Aorta (tissue), 5 donors: ENCODE measurements at regions of chr1 and their contacts with region 1.

Region 1: DNA sequence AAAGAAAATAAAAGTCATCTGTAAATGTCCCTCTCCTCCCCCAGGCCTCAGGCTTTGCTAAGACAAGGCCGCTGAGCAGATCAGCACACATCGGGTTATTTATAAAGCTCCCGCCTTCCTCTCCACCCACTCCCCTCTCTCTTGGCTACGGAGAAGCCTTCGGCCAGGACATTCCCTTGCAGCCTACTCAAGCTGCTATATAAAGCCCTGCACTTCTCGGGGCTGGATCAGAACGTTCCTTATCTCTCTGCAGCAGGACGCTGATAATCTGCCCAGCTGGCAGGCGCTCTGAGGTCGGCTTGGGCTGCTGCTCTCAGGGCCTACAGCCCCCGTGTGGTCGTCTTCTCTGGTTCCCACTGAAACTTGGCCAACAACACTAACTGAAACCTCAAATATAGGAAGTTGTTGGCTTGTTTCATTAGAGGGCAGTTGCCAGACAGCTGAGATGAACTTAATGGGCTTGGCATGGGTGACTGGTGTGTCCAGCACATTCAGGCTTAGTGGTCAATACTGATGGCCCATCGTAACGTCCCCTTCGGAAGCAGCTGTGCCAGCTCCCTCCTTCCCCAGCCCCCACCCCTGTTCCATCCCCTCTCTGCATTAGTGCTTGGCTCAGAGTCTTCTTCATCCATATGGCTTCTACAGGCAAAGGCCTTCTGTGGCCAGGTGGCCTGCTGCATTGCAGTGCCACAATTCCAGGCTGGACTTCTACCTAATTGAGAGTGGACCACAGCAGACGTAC is 64.6 kb downstream of the IER5 start:
- DNase-seq: peak; percentile 87 to 92
- ATAC-seq: peak; percentile 95
- H3K4me3 ChIP-seq: no peak overlapping the region
- H3K27ac ChIP-seq: peak overlapping the region; percentile 73 to 98
- H3K4me1 ChIP-seq: peaks cover 0 to 6% of the 10 kb centered on the region in 2 donors
- H3K27me3 ChIP-seq: no peaks in the 10 kb centered on the region

Region 2: DNA sequence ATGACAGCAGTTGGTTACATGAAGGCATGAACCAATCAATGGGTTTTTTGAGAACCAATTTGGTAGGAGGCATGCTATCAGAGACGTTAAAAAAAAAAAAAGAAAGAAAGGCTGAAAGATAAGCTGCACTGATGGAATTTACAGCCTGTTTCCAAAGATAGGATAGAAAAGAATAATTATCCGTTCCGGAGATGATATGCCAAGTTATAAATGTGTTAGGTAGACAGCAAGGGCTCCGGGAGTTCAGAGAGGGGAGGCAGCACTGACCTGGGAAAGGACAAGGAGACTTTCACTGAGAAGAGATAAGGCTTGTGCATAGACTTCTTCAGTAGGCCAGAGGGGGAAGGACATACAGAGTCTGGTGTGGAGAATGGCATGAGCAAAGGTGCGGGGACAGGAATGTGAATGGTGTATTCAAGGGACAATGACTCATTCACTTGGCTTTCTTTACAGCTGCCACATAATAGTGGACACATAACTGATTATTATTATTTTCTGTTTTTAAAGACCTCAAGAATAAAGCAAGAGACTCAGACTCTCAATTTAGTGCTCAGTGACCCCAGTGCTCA is 625.9 kb before region 1 on chr1:
- intact Hi-C with region 1: loop called (anchors 10 kb)
- DNase-seq: no peak
- ATAC-seq: no peak
- H3K4me3 ChIP-seq: no peak overlapping the region
- H3K27ac ChIP-seq: peak overlapping the region; percentile 11 to 66
- H3K4me1 ChIP-seq: peaks cover 6 to 8% of the 10 kb centered on the region in 2 donors
- H3K27me3 ChIP-seq: no peaks in the 10 kb centered on the region

Region 3: DNA sequence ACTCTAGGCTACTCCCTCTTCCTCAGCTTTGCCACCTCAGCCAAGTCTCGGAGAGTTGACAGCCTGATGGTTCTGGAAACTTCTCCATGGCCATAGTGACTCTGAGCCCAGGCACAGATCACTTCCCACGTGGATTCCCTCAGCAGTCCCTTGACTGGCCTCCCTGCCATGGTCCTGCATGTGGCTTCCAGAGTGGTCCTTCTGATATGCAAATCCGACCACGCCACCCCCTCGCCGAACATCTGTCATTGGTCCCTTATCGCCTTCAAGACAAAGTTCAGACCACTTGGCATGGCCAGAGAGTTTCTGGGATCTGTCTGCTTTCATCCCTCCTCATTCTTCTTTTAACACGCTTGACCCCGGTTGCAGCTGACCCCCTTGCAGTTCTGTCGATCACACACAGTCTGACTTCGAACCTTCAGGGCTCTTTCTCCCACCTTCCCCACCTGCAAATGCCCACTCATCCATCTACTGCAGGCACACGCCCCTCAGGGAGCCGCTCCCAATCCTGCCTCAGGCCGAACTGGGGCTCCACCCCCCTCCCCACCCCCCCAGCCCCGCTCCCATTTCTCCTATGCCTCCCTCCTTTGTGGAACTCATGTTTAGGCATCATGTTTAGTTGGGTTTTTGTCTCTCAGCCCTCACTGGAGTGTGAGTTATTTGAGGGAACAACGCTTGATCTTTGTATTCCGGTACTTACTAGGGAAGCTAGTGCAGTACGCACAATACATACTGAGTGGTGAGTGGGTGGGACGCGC is 211.4 kb before region 1 on chr1:
- intact Hi-C with region 1: no loop called
- DNase-seq: no peak
- ATAC-seq: no peak
- H3K4me3 ChIP-seq: no peak overlapping the region
- H3K27ac ChIP-seq: no peak overlapping the region
- H3K4me1 ChIP-seq: no peaks in the 10 kb centered on the region
- H3K27me3 ChIP-seq: no peaks in the 10 kb centered on the region